Activated naive CD4-positive, alpha-beta T cell treated with anti-CD3 and anti-CD28 coated beads for 36 hours (primary cell): ENCODE measurements at regions of chr1 and their contacts with region 1.

Region 1: GRCh38 chr1:45686317-45687013 is at the start of gene GPBP1L1:
- DNase-seq: peak; percentile 99
- H3K4me3 Mint-ChIP-seq: peak within 1 kb of the TSS; percentile 98
- H3K27ac Mint-ChIP-seq: peak within 1 kb of the TSS; percentile 100
- H3K4me1 Mint-ChIP-seq: peaks cover 50% of the 10 kb centered on the region
- H3K27me3 Mint-ChIP-seq: no peaks in the 10 kb centered on the region
- total RNA-seq, gene GPBP1L1: 113 to 122 TPM

Region 2: DNA sequence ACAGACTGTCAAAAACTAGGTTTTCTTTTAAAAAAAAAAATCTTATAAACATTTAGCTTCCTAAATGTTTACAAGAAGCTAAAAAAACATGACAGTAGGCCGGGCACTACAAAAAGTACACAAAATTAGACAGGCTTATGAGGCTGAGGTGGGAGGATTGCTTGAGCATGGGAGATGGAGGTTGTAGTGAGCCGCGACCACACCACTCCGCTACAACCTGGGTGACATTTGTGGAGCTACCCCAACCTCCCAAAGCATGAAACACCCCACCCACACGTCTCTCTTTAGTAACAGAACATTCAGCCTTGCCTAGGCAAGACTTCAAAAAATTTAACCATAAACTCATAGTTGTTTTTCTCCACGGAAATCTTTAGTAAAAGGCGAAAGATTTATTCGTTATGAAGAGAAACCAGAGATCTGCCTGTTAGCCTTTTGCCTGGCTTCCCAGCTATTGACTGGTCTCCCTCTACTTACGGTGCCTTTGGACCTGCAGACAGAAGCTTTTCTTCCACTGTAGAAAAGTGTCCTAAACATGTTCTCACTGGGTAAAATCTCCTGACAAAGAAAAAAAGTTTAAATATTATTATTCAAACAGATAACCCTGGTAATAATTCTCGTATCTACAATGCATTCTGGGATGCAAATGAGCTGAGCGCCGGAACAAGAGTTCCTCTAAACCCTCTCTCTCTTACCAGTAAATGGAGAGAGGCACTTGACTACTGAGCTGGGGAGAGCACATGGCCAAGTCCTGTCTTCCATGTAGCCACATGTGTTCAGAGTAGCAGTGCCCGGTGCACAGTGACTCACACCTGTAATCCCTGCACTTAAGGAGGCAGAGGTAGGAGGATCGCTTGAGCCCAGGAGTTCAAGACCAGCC is 964.7 kb before region 1 on chr1:
- CTCF ChIA-PET with region 1: no interaction called
- intact Hi-C with region 1: loop called (anchors 2 kb)
- DNase-seq: peak; percentile 90
- H3K4me3 Mint-ChIP-seq: peak overlapping the region; percentile 66
- H3K27ac Mint-ChIP-seq: peak overlapping the region; percentile 98
- H3K4me1 Mint-ChIP-seq: peaks cover 83% of the 10 kb centered on the region
- H3K27me3 Mint-ChIP-seq: no peaks in the 10 kb centered on the region

Region 3: GRCh38 chr1:45011837-45012638 is 674.4 kb before region 1 on chr1 and contains the start of gene UROD:
- CTCF ChIA-PET with region 1: no interaction called
- intact Hi-C with region 1: loop called (anchors 1 kb)
- DNase-seq: peak; percentile 96
- H3K4me3 Mint-ChIP-seq: peak within 1 kb of the TSS; percentile 81
- H3K27ac Mint-ChIP-seq: peak within 1 kb of the TSS; percentile 89
- H3K4me1 Mint-ChIP-seq: peaks cover 36% of the 10 kb centered on the region
- H3K27me3 Mint-ChIP-seq: no peaks in the 10 kb centered on the region
- total RNA-seq, gene UROD: 117 to 126 TPM

Region 4: DNA sequence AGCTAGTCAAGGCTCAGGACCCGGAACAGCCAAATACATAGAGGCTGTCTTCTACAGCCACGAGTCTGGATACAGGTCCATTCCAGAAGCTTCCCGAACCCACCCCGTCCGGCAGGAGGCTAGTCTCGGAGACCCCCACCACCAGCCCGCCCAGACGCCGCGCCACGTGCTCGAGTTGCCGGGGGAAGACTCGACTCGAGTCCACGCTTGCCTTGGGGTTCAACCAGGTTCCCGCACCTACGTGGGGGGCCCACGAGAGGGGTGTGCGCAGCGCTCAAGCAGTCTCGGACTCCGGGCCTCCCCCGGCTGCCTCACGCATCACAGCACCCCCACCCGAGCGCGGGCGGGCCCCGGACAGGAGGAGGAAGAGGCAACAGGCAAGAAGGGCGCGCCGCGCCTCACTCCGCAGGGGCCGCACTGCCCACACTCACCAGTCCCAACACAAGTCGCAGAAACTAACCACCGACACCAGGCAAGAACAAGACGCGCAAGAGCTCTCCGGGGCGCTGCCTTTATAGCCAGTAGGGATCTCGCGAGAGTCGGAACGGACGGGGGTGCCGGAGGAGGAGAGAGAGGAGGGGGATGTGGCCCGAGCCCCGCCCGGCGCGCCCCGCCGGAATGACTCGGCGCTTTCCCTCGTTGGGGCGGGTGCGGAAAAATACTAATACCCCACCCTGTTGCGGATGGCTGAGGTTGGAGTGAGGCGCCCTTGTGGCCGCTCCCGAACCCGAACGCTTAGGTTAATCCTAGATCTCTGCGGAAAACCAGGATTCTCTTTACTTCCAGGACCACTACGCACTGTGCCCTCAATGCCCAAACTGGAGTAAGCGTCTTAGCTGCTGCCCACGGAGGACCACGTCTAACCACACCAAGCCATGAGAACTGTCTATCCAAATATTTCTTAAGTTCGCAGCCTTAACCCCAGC is 164.8 kb before region 1 on chr1 and contains the start of gene PRDX1:
- CTCF ChIA-PET with region 1: no interaction called
- intact Hi-C with region 1: loop called (anchors 1 kb)
- DNase-seq: peak; percentile 96
- H3K4me3 Mint-ChIP-seq: peak within 1 kb of the TSS; percentile 93
- H3K27ac Mint-ChIP-seq: peak within 1 kb of the TSS; percentile 88
- H3K4me1 Mint-ChIP-seq: peaks cover 46% of the 10 kb centered on the region
- H3K27me3 Mint-ChIP-seq: no peaks in the 10 kb centered on the region
- total RNA-seq, gene PRDX1: 596 to 641 TPM

Region 5: DNA sequence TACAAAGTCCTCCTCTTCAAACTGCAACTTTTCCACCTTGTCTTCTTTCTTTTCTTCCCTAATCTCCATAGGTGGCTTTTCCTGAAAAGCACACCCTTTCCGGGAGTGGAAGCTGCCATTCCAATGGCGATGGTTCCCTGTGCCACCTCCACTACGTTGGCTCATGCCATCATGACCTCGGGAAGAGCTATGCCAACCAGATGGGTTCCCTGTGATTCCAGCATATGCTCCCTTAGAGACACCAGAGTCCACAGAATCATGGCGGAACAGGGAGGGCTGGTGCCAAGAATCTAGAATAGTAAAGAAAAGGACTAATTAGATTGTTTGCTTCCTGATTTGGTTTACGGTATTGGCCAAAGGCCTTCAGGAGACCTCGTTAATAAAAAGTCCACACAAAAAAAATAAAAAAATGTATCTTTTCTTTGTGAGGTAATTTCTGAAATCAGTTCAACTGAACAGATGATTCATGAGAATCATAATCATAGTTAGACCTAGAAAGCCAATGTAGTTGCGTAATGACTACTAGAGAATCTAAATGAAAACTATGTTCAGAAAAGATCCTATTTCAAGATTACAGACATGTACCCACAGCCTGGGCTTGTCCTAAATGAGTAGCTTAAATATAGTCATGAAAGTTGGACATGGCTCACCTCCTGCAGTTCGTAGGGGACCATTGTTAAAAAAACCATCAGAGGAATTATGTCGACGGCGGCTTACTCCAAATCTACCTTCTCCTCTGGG is 31.8 kb before region 1 on chr1:
- CTCF ChIA-PET with region 1: no interaction called
- intact Hi-C with region 1: loop called (anchors 5 kb)
- DNase-seq: no peak
- H3K4me3 Mint-ChIP-seq: no peak overlapping the region
- H3K27ac Mint-ChIP-seq: peak overlapping the region; percentile 19
- H3K4me1 Mint-ChIP-seq: peaks cover 10% of the 10 kb centered on the region
- H3K27me3 Mint-ChIP-seq: no peaks in the 10 kb centered on the region

Region 6: DNA sequence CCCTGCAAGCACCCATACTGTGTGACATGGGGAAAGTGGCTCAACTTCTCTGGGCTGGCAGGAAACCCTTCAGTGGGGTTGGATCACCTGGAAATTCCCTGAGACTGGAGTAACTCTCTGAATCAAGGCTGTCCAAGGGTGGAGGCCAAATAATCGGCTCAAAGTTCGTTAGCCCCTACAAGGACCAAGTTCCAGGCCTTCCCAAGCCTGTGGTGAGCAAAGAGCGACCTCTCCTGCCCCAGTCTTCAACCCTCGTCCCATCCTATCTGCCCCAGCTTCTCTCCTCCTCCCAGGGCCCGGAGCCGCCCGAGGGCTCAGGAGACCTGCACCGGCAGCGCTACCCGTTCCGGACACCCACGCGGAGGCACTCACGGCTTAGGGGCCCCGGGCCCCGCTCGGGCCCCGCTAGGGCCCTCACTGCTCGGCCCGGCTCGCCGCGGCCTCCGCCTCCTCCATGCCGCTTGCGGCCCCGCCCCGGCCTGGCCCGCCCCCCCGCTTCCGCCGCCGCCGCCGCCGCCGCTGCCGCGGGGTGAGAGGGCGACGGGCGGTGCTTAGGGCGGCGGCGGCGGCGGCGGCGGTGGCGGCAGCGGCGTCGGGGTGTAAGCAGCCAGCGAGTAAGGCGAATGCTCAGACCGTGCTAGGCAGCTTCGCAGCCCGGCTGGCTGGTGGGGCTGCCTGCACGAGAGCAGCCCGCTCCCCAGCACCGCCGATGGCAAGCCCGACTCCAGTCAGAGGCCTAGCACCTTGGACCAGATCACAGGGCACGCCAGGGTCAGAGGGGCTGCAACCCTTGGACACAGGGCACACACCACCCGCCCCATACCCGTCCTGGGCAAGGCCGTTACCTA is 511.7 kb after region 1 on chr1 and contains the start of gene POMGNT1:
- CTCF ChIA-PET with region 1: no interaction called
- intact Hi-C with region 1: loop called (anchors 5 kb)
- DNase-seq: peak; percentile 73
- H3K4me3 Mint-ChIP-seq: peak within 1 kb of the TSS; percentile 81
- H3K27ac Mint-ChIP-seq: peak within 1 kb of the TSS; percentile 70
- H3K4me1 Mint-ChIP-seq: peaks cover 29% of the 10 kb centered on the region
- H3K27me3 Mint-ChIP-seq: no peaks in the 10 kb centered on the region
- total RNA-seq, gene POMGNT1: 32.4 to 32.9 TPM

Region 7: DNA sequence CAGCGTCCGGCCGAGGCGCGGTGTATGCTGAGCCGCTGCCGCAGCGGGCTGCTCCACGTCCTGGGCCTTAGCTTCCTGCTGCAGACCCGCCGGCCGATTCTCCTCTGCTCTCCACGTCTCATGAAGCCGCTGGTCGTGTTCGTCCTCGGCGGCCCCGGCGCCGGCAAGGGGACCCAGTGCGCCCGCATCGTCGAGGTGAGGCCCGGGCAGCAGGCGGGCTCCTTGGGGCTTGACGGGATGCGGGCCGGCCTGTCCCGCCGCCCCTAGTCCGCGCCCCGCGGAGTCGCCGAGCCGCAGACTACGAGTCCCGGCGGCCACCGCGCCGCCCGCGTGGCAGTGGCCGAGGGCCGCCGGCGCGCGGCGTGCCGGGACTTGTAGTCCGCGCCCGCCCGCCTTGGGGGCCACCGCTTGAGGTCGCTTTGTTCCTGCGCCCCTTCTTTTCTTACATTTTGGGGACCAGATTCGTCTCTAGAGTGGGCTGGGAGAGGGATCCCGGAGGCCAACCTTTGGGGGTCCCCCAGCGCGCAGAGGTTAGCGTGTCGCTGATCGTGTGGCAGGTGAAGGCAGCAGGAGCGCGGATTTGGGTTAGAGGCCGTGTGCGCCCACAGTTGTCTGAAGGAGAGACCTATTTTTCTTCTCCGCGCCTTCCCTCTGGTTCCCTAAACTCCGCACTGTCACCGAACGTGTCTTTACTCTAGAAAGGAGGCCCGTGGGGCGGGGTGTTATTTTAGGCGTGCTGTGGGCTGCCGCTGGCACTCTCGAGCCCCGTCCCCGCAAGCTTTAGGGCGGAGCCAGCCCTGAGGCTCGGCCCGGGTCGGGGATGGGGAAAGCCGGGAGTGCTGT is 1647.7 kb after region 1 on chr1:
- CTCF ChIA-PET with region 1: no interaction called
- intact Hi-C with region 1: loop called (anchors 2 kb)
- DNase-seq: peak; percentile 75
- H3K4me3 Mint-ChIP-seq: peak overlapping the region; percentile 88
- H3K27ac Mint-ChIP-seq: peak overlapping the region; percentile 93
- H3K4me1 Mint-ChIP-seq: peaks cover 20% of the 10 kb centered on the region
- H3K27me3 Mint-ChIP-seq: no peaks in the 10 kb centered on the region